PC-3 (cell line): ENCODE measurements at regions of chr17 and their contacts with region 1.

Region 1: GRCh38 chr17:65785109-65785508 is 223.7 kb upstream of the AXIN2 start:
- DNase-seq: peak; percentile 99
- ATAC-seq: peak; percentile 80
- H3K4me3 ChIP-seq: no peak overlapping the region; the same call in 1 of the 2 replicates
- H3K27ac ChIP-seq: peak overlapping the region; percentile 88
- H3K4me1 ChIP-seq: peaks cover 36% of the 10 kb centered on the region
- H3K27me3 ChIP-seq: no peaks in the 10 kb centered on the region
- CTCF ChIP-seq: no peak

Region 2: DNA sequence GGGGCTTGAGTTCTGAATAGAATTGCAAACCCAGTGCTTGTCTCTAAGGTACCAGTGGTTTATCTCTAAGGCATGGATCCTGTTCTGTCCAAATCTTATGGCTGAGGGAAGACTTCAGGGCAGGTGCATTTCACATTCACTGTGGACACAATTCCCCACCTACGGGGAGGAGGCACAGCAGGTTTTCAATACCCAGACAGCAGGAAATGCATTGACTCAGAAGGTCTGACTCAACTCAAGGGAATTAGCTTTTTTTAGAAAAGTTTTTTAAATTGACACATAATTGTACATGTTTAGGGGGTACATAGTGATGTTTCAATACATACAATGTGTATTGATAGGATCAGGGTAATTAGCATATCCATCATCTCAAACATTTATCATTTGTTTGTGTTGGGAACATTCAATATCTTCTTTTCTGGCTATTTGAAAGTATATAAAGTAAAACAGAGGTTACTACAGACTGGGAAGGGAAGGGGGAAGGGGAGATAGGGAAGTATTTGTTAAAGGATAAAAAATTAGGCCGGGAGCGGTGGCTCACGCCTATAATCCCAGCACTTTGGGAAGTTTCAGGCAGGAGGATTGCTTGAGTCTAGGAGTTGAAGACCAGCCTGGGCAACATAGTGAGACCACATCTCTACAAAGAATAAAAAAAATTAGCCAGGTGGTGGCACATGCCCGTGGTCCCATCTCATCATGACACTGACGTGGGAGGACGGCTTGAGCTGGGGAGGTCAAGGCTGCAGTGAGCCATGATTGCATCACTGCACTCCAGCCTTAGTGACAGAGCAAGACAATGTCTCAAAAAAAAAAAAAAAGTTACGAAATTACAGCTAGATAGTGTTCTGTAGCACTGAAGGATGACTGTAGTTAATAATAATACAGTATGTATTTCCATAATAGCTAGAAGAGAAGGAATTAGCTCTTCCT is 593.0 kb before region 1 on chr17:
- CTCF ChIA-PET with region 1: no interaction called
- POLR2A ChIA-PET with region 1: no interaction called
- intact Hi-C with region 1: no loop called
- DNase-seq: peak; percentile 90
- ATAC-seq: peak; percentile 93
- H3K4me3 ChIP-seq: peak overlapping the region; percentile 14; the same call in 1 of the 2 replicates
- H3K27ac ChIP-seq: peak overlapping the region; percentile 65
- H3K4me1 ChIP-seq: peaks cover 31% of the 10 kb centered on the region
- H3K27me3 ChIP-seq: no peaks in the 10 kb centered on the region
- CTCF ChIP-seq: no peak

Region 3: GRCh38 chr17:65283704-65284103 is 501.4 kb before region 1 on chr17:
- CTCF ChIA-PET with region 1: no interaction called
- POLR2A ChIA-PET with region 1: no interaction called
- intact Hi-C with region 1: loop called (anchors 2 kb)
- DNase-seq: peak; percentile 97
- ATAC-seq: peak; percentile 98
- H3K4me3 ChIP-seq: no peak overlapping the region
- H3K27ac ChIP-seq: peak overlapping the region; percentile 79
- H3K4me1 ChIP-seq: peaks cover 18% of the 10 kb centered on the region
- H3K27me3 ChIP-seq: no peaks in the 10 kb centered on the region
- CTCF ChIP-seq: no peak

Region 4: DNA sequence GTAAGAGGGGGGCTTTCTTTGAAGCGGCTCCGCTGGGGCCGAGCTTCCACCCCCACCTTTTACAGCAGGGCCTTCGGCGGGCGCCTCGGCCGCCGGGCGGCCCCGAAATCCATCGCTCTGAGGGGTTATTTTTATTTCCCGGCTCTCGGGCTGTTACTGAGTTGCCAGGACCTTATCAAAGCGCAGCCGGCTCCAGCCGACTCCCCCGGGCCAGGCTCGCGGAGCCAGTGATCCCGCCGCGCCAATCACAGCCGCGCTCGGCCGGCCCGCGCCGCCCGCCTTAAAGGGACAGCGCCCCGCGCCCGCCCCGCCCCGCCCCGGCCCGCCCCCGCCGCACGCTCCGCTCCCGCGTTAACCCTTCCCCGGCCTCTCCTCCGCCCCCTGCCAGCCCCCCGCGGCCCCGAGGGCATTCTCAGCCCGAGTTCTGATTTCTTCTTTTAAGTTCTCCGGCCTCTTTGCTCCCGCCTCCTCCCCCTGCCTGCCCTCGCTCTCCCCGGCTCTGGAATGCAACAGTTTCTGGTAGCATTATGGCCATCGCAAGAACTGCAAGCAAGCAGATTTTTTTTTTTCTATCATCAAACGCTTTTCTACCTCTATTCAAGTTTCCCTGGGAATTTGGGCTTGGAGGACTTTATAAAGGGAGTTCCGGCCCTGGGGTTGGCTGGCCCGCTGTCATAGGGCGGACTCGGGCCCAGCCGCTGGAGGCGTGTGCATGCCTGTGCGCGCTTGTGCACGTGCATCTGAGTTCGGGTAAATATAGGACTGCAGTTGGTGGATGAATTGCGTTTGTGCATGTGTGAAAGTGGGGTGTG is 223.5 kb before region 1 on chr17 and contains the start of gene AXIN2:
- CTCF ChIA-PET with region 1: no interaction called
- POLR2A ChIA-PET with region 1: interaction called, 15 read pairs
- intact Hi-C with region 1: loop called (anchors 1 kb)
- DNase-seq: peak; percentile 93
- ATAC-seq: peak; percentile 85
- H3K4me3 ChIP-seq: peak within 1 kb of the TSS; percentile 82
- H3K27ac ChIP-seq: peak within 1 kb of the TSS; percentile 59
- H3K4me1 ChIP-seq: peaks cover 15% of the 10 kb centered on the region
- H3K27me3 ChIP-seq: peaks cover 10% of the 10 kb centered on the region
- CTCF ChIP-seq: no peak; the same call in 1 of the 2 replicates
- total RNA-seq, gene AXIN2: 2.0 and 2.6 TPM in 2 replicates

Region 5: DNA sequence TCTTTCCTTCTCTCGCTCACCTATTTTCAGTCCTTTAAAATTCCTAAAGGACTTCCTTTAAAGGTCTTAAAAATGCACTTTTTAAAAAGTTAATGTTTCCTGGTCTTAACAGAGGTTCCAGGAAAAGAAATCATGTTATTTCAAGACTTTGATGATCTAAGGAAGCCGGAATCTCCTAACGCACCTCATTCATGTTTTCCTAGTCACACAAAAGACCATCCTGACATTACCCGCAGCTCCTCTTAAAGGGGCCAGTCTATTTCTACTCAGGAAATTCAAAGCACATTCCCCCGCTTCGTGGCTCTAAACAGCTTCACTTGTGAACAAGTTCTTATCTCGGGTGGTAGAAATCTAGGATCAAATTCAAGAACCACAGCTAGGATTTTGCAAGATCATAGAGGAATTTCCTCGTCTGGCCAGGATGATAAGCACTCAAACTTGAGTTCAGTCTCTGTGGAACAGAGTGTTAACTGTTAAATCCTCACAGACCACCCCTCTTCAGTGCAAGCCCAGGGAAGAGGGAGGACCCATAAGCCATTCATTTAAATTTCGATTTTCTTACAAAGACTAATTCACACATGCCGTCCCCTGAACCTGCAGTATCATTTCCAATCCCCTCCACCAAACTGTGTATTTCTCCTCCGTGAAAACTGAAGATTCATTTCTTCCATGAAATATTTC is 86.6 kb before region 1 on chr17:
- CTCF ChIA-PET with region 1: no interaction called
- POLR2A ChIA-PET with region 1: no interaction called
- intact Hi-C with region 1: loop called (anchors 1 kb)
- DNase-seq: no peak
- ATAC-seq: no peak
- H3K4me3 ChIP-seq: no peak overlapping the region
- H3K27ac ChIP-seq: no peak overlapping the region
- H3K4me1 ChIP-seq: peaks cover 30% of the 10 kb centered on the region
- H3K27me3 ChIP-seq: no peaks in the 10 kb centered on the region
- CTCF ChIP-seq: no peak

Region 6: DNA sequence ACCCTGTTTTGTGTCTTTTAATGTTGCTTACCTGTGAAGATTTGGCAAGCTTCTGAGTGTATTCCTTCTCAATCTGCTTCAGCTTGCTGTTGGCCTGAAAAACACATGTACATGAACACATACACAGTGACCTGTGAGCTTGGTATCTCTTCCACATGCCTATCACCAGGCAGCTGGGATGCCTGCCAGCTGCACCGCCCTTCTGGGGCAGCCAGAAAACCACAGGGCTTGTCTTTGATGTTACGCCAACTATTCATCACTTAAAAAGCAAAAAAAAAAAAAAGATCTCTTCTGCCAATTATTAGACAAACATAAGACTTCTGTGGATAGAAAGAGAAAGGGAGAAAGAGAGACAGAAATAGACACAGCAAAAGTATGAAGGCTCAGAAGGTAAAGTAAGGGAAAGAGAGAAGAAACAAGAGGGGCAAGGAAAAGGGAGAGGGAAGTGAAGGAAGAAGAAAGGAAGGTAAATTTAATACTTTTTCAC is 34.4 kb before region 1 on chr17:
- CTCF ChIA-PET with region 1: no interaction called
- POLR2A ChIA-PET with region 1: no interaction called
- intact Hi-C with region 1: loop called (anchors 1 kb)
- DNase-seq: peak; percentile 99
- ATAC-seq: peak; percentile 95
- H3K4me3 ChIP-seq: no peak overlapping the region
- H3K27ac ChIP-seq: no peak overlapping the region
- H3K4me1 ChIP-seq: peaks cover 26% of the 10 kb centered on the region
- H3K27me3 ChIP-seq: no peaks in the 10 kb centered on the region
- CTCF ChIP-seq: no peak

Region 7: DNA sequence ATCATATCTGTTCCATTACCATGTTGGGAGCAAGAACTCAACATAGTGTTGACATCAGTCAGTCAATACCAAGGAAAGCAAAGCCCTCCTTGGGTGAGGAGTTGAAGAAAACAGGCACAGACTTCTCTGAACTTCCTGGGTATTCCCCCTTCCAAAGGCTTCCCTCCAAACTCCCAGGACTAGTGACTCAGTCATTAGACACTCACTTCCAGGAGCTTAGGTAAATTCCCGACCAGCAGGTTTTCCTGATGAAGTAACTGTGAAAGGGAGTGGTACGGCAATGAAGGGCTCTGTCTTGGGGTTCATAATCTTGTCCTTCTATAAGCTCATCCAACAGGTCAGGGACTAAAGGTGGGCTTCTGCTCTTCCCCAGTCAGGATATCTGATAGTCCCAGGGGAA is 70.1 kb after region 1 on chr17:
- CTCF ChIA-PET with region 1: no interaction called
- POLR2A ChIA-PET with region 1: no interaction called
- intact Hi-C with region 1: loop called (anchors 2 kb)
- DNase-seq: peak; percentile 98
- ATAC-seq: peak; percentile 73
- H3K4me3 ChIP-seq: peak overlapping the region; percentile 10; the same call in 1 of the 2 replicates
- H3K27ac ChIP-seq: peak overlapping the region; percentile 88
- H3K4me1 ChIP-seq: peaks cover 47% of the 10 kb centered on the region
- H3K27me3 ChIP-seq: no peaks in the 10 kb centered on the region
- CTCF ChIP-seq: no peak

Region 8: DNA sequence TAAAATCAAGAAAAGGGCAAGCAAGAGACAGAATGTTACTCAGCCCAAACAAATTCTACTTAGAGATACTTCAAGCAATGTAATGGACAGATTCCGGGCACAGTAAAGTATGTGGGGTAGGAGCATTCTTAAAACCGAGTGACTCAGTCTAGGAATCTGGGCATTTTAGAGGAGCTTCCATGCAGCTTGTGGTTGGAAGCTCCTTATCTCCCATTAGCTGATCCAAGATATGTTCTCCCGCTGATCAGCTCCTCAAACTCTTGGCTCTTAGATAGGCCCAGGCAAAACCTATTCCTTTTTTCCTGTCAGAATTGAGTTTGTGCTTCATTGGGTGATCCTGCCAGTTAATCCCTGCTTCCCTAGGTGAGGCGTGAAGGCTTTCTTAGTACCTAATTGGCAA is 103.5 kb after region 1 on chr17:
- CTCF ChIA-PET with region 1: no interaction called
- POLR2A ChIA-PET with region 1: no interaction called
- intact Hi-C with region 1: no loop called
- DNase-seq: no peak
- ATAC-seq: no peak
- H3K4me3 ChIP-seq: no peak overlapping the region
- H3K27ac ChIP-seq: no peak overlapping the region
- H3K4me1 ChIP-seq: 0 out of 2 replicates have a peak, but pooled peaks cover 4% of the 10 kb centered on the region
- H3K27me3 ChIP-seq: no peaks in the 10 kb centered on the region
- CTCF ChIP-seq: no peak